ENCODE measurements at regions of chr12 and their contacts with region 1.

Region 1: GRCh38 chr12:10740182-10740581 is 17.1 kb upstream of the YBX3 start:
- DNase-seq: peak; percentile 75
- H3K4me3 Mint-ChIP-seq: peak overlapping the region; percentile 9
- H3K27ac Mint-ChIP-seq: peak overlapping the region; percentile 90
- H3K4me1 Mint-ChIP-seq: peaks cover 64% of the 10 kb centered on the region
- H3K27me3 Mint-ChIP-seq: no peaks in the 10 kb centered on the region
- CTCF ChIP-seq: no peak

Region 2: GRCh38 chr12:10722905-10723866 is 17.0 kb before region 1 on chr12 and contains the start of gene YBX3:
- CTCF ChIA-PET with region 1: interaction called, 11 read pairs
- intact Hi-C with region 1: no loop called
- DNase-seq: peak; percentile 85
- H3K4me3 Mint-ChIP-seq: peak within 1 kb of the TSS; percentile 89
- H3K27ac Mint-ChIP-seq: peak within 1 kb of the TSS; percentile 97
- H3K4me1 Mint-ChIP-seq: peaks cover 17% of the 10 kb centered on the region
- H3K27me3 Mint-ChIP-seq: no peaks in the 10 kb centered on the region
- CTCF ChIP-seq: no peak
- total RNA-seq, gene YBX3: 295 and 312 TPM in 2 replicates

Measured in Calu3 (cell line).